Heart right ventricle (tissue), 16 donors: ENCODE measurements at regions of chr16 and their contacts with region 1.

Region 1: DNA sequence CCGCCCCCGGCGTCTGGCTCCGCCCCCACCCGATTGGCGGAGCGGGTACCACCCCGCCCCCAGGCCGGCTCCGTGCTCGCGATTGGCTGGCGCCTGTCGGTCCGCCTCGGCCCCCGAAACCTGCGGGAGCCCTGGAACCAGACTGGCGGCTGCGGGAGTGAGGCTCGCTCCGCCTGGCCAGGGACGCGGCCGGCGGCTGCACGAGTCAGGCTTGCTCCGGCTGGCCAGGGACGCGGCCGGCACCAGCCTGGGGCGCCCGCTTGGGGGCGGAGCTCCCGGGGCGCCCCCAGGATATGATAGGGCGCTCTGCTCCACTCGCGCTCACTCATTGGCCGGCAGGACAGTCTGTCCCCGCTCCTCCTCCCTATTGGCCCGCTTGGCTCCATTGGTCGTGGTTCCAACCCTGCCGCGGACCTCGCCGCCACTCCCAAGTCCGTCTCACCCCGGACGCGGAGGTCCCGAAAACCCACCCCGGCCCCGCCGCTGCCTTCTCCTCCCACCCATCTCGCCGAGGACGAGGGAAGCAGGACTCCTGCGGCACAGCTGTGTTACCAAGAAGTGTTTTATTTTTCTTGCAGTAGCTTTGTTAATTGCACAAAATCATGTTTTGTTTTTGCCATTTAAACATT is 340 bp upstream of the ROGDI start:
- DNase-seq: peak; percentile 93 to 94
- ATAC-seq: peak; percentile 90 to 96 (median 92)
- H3K4me3 ChIP-seq: peak overlapping the region; percentile 64 to 95 (median 84)
- H3K27ac ChIP-seq: peak overlapping the region; percentile 67 to 96 (median 92)
- H3K4me1 ChIP-seq: peaks cover 0 to 51% (median 29%) of the 10 kb centered on the region in 9 donors
- H3K27me3 ChIP-seq: no peaks in the 10 kb centered on the region
- CTCF ChIP-seq: peak in 7 of 9 donors; percentile 15 to 52 (median 32)

Region 2: GRCh38 chr16:4766874-4767628 is 35.7 kb before region 1 on chr16 and contains the start of gene ZNF500:
- intact Hi-C with region 1: loop called in 3 of 10 experiments (anchors 5 kb)
- DNase-seq: peak; percentile 99
- ATAC-seq: peak; percentile 94 to 97 (median 96)
- H3K4me3 ChIP-seq: peak within 1 kb of the TSS; percentile 79 to 99 (median 86)
- H3K27ac ChIP-seq: peak within 1 kb of the TSS; percentile 51 to 93 (median 88)
- H3K4me1 ChIP-seq: peaks cover 12 to 44% (median 32%) of the 10 kb centered on the region in 9 donors
- H3K27me3 ChIP-seq: no peaks in the 10 kb centered on the region
- CTCF ChIP-seq: peak in 2 of 9 donors; percentile 6 to 12
- total RNA-seq, gene ZNF500: 4.3 to 9.9 (median 8.1) TPM

Region 3: GRCh38 chr16:4846891-4847773 is 44.4 kb after region 1 on chr16 and contains the starts of genes GLYR1 and UBN1:
- intact Hi-C with region 1: loop called in 4 of 10 experiments (anchors 2 to 5 kb)
- DNase-seq: peak; percentile 99 to 100
- ATAC-seq: peak; percentile 97 to 99 (median 98)
- H3K4me3 ChIP-seq: peak within 1 kb of the TSS; percentile 80 to 100 (median 96)
- H3K27ac ChIP-seq: peak within 1 kb of the TSS; percentile 85 to 99 (median 96)
- H3K4me1 ChIP-seq: peaks cover 17 to 65% (median 56%) of the 10 kb centered on the region in 9 donors
- H3K27me3 ChIP-seq: no peaks in the 10 kb centered on the region
- CTCF ChIP-seq: no peak
- total RNA-seq, gene GLYR1: 70.9 to 105 (median 75.1) TPM
- total RNA-seq, gene UBN1: 28.1 to 56.9 (median 31.1) TPM

Region 4: DNA sequence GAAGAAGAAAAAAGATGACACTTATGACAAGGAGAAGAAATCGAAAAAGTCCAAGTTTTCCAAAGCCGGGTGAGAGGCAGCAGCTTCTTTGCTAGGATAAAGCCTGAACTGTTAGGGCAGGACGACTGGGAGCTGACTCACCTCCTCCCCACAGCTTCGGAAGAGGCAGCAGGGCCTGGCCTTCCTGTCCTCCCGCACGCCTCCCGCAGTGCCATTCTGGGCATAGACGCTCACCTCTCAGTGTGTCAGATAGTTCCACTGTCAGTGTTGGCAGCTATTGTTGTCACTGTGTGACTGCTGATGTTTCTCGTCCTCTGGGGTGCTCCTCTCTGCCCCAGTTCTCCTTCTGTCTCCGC is 57.1 kb after region 1 on chr16:
- intact Hi-C with region 1: loop called in 1 of 10 experiments (anchors 10 kb)
- DNase-seq: no peak
- ATAC-seq: peak in 6 of 8 donors; percentile 54 to 76 (median 64)
- H3K4me3 ChIP-seq: no peak overlapping the region
- H3K27ac ChIP-seq: peak overlapping the region in 8 of 10 donors; percentile 17 to 65 (median 38)
- H3K4me1 ChIP-seq: peaks cover 0 to 49% (median 21%) of the 10 kb centered on the region in 9 donors
- H3K27me3 ChIP-seq: no peaks in the 10 kb centered on the region
- CTCF ChIP-seq: no peak